Psoas muscle (tissue), 8 donors: ENCODE measurements at regions of chr18 and their contacts with region 1.

Region 1: DNA sequence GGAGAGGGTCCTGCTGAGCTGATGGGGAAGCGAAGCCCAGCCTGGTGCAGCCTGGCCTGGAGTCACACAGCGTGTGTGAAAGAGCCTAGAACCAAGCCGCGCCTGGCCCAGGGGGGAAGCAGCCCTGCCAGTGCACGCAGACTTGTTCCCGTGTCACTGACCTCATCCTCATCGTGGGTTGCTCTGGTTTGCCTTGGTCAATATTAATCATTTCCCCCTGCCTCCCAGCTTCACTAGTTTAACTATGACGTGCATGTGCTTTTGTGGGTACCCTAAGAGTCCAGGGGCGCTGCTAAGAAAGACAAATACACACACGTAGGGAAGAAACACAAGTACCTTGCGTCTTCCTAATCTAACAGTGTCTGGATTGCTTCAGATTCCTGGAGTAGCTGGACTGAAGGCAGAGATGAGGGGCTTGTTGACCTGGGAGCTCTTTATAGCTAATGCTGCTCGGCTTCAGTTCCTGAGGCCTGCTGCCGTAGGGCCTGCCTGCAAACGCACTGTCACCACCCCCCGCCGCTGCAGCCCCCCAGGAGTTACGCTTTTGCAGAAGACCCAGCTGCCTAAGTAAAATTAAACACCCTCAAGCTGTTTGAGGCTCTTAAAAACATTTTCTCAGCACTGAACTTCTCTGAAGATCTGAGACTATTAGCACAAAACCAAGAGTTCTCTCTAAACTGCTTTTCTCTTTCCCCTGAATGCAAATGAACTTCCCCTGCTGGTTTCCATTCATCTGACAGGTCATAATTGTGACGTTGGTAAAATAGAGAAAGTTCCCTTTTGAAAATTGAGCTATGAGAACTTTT is 159.2 kb downstream of the FAM210A start:
- DNase-seq: peak; percentile 44 to 76
- ATAC-seq: no peak
- H3K4me3 ChIP-seq: no peak overlapping the region
- H3K27ac ChIP-seq: no peak overlapping the region
- H3K4me1 ChIP-seq: peaks cover 20% of the 10 kb centered on the region
- H3K27me3 ChIP-seq: no peaks in the 10 kb centered on the region
- CTCF ChIP-seq: no peak

Region 2: DNA sequence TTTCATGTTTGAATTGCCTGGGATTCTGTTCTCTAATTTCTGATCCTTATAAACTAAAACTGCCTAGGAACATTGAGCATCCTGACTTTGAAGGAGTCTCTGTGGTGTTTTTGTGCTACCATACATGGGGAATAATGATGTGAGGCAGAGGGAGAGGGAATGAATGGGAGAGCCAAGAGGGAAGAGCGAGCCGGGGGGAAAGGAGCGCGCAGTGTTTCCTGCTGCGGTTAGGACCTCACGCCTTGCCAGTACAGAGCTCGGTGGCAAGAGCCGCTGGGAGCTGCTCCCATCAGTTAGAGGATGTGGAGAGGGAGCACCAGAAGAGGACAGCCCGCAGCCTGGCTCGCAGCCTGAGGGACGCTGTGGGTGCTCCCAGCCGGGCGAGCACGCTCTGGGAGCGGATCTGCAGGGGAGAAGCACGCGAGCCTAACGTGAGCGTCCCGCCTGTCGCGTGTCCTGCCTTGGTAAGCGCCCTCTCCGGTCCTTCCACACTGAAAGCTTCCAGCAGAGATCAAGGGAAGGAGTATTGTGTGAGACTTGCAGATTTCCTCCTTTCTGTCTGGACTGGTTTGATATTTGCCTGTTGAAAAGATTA is 44.6 kb after region 1 on chr18:
- intact Hi-C with region 1: loop called in 1 of 2 experiments (anchors 10 kb)
- DNase-seq: peak; percentile 44 to 71
- ATAC-seq: peak; percentile 55 to 67 (median 60)
- H3K4me3 ChIP-seq: peak overlapping the region; percentile 68
- H3K27ac ChIP-seq: peak overlapping the region; percentile 81
- H3K4me1 ChIP-seq: peaks cover 26% of the 10 kb centered on the region
- H3K27me3 ChIP-seq: no peaks in the 10 kb centered on the region
- CTCF ChIP-seq: no peak

Region 3: DNA sequence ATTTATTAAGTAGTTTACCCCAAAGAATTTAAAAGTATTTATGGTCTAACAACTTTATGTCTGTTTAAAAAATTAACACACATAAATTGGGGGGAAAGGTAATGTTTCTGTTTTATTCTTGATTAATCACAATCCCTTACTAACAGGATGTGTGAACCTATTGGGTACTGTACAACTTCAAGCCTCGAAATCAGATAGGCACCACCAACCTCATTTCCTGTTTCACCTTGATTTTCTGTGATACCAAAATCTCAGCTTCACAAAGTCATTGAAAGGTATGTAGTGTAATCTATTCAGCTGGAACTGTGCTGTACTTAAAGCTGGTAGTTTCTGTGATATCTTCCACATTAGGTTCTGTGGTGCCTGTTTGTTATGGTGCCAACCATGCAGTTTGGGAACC is 163.3 kb after region 1 on chr18:
- intact Hi-C with region 1: no loop called
- DNase-seq: no peak
- ATAC-seq: no peak
- H3K4me3 ChIP-seq: no peak overlapping the region
- H3K27ac ChIP-seq: no peak overlapping the region
- H3K4me1 ChIP-seq: peaks cover 24% of the 10 kb centered on the region
- H3K27me3 ChIP-seq: no peaks in the 10 kb centered on the region
- CTCF ChIP-seq: no peak